SK-N-SH (cell line): ENCODE measurements at regions of chr5 and their contacts with region 1.

Region 1: DNA sequence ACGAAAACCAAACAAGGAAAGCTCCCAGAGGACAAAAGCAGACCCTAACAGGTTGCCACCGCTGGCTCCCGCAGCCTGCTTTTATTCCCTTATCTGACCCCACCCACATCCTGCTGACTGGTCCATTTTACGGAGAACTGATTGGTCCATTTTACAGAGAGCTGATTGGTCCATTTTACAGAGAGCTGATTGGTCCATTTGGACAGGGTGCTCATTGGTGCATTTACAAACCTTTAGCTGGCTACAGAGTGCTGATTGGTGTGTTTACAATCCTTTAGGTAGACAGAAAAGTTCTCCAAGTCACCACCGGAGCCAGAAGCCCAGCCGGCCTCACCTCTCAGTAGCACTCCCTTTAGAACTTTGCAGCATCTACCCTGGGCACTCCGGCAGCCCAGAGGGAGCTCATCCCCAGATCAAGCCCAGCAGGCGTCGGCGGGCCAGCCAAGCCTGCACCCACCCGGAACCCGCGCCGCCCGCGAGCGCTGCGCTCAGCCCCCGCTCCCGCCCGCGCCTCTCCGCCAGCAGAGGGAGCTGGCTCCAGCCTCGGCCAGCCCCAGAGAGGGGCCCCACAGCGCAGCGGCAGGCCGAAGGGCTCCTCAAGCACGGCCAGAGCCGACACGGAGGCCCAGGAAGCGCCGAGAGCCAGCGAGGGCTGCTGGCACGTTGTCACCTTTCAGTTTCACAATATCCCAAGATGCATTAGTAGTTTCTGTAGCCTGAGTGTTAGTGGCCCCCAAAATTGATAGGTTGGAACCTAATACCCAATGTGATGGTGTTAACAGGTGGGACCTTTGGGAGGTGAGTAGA is 35.3 kb upstream of the CLPTM1L start:
- DNase-seq: peak; percentile 67
- H3K4me3 ChIP-seq: peak overlapping the region in 1 of 2 experiments; percentile 39; a peak in 3 of 4 replicates
- H3K27ac ChIP-seq: no peak overlapping the region
- H3K4me1 ChIP-seq: no peaks in the 10 kb centered on the region; a peak in 1 of 4 replicates
- H3K27me3 ChIP-seq: peaks cover 26% of the 10 kb centered on the region; the same call in 1 of the 2 replicates
- CTCF ChIP-seq: peak; percentile 67
- EP300 ChIP-seq: no peak
- RAD21 ChIP-seq: peak; percentile 29; the same call in 1 of the 2 replicates

Region 2: DNA sequence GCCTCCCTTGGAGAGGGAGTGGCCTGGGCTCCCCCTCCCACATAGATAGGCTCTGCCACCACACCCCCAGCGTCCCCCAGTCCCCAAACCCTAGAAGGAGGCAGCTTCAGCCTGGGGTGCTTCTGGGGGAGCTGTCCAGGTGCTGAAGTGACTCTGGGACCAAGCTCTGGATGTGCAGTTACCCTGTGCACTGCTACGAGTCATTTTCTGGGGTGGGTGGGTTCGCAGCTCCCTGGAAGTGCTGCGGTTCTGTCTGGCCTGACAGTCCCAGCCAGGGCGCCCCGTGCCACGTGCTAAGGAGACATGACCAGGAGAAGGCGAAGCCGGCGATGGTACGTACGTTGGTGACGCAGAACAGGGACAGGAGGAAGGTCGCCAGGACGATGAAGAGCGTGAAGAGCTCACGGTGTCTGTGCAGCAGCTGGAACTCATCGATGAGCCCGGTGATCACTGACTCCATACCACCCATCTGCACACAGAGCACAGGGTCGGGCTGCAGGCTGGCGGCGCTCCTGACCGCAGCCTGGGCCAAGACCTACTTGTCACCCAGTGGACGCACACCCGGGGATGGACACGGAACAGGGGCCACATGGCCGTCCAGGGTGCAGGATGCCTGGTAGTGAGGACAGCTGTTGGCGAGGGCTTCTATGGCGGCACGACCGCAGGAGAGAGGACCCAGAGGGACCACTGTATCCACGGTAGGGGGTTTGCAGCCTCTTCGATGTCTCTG is 29.3 kb after region 1 on chr5:
- CTCF ChIA-PET with region 1: interaction called, 11 read pairs
- POLR2A ChIA-PET with region 1: no interaction called
- DNase-seq: no peak
- H3K4me3 ChIP-seq: no peak overlapping the region
- H3K27ac ChIP-seq: no peak overlapping the region
- H3K4me1 ChIP-seq: no peaks in the 10 kb centered on the region
- H3K27me3 ChIP-seq: no peaks in the 10 kb centered on the region
- CTCF ChIP-seq: no peak
- EP300 ChIP-seq: no peak
- RAD21 ChIP-seq: no peak

Region 3: DNA sequence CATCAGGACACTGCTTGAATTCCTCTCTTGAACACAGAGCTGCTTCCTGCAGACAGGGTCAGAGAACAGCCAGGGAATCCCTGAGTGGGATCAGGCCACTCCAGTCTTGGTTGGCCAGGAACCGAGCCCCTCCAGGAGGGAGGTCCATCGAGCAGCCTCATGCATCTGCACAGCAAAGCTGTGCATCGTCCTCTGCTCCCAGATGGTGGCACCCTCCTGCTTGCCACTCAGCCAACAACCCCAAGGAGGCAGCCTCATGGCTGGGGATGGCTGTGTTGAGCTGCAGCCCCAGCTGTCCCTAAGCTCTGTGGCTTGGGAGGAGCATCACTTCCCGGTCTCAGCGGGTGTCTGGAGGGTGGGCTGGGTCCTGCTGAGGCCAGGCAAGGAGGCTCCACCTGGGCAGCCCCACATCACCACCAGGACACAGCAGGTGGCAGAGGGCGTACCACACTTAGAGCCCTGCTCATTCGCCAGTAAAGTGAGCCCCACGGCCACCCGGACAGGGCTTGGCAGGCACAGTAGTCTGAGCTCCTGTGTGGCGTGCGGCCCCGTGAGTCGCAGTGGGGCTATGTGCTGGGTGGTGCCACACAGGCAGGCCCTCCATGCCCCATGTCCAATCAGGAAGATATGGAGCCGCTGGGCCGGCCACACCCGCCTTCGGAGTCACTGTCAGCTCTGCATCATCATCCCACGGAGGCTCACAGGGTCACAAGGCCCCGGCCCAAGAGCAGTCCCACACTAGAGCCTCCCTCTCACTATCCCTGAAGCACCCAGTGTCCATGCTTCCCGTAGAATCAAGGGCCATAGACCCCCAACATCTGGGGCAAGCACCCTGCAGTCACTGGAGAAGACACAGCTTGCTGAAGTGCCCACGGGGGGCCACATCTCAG is 131.7 kb after region 1 on chr5:
- CTCF ChIA-PET with region 1: no interaction called
- POLR2A ChIA-PET with region 1: no interaction called
- DNase-seq: no peak
- H3K4me3 ChIP-seq: no peak overlapping the region
- H3K27ac ChIP-seq: no peak overlapping the region
- H3K4me1 ChIP-seq: peaks cover 0 to 6% of the 10 kb centered on the region in 2 experiments; a peak in 2 of 4 replicates
- H3K27me3 ChIP-seq: no peaks in the 10 kb centered on the region
- CTCF ChIP-seq: peak; percentile 23; the same call in 1 of the 2 replicates
- EP300 ChIP-seq: no peak
- RAD21 ChIP-seq: no peak

Region 4: GRCh38 chr5:1831677-1832313 is 451.6 kb after region 1 on chr5:
- CTCF ChIA-PET with region 1: no interaction called
- POLR2A ChIA-PET with region 1: no interaction called
- DNase-seq: peak; percentile 14
- H3K4me3 ChIP-seq: no peak overlapping the region
- H3K27ac ChIP-seq: no peak overlapping the region
- H3K4me1 ChIP-seq: no peaks in the 10 kb centered on the region
- H3K27me3 ChIP-seq: peaks cover 52% of the 10 kb centered on the region
- CTCF ChIP-seq: no peak
- EP300 ChIP-seq: no peak
- RAD21 ChIP-seq: no peak